ENCODE measurements at regions of chr1 and their contacts with region 1.

Region 1: GRCh38 chr1:54965624-54966340 is 14.6 kb upstream of the TMEM61 start:
- DNase-seq: peak; percentile 60
- ATAC-seq: peak; percentile 97
- H3K4me3 ChIP-seq: no peak overlapping the region
- H3K27ac ChIP-seq: peak overlapping the region; percentile 34; the same call in 1 of the 2 replicates
- H3K4me1 ChIP-seq: peaks cover 13% of the 10 kb centered on the region
- H3K27me3 ChIP-seq: no peaks in the 10 kb centered on the region
- CTCF ChIP-seq: no peak
- EP300 ChIP-seq: no peak
- POLR2A ChIP-seq: no peak
- RAD21 ChIP-seq: no peak

Region 2: GRCh38 chr1:54996359-54996868 is 30.6 kb after region 1 on chr1:
- CTCF ChIA-PET with region 1: interaction called, 17 read pairs
- POLR2A ChIA-PET with region 1: no interaction called
- RAD21 ChIA-PET with region 1: no interaction called
- SMC1A ChIA-PET with region 1: interaction called, 3 read pairs
- in situ Hi-C with region 1: no loop called
- intact Hi-C with region 1: no loop called
- DNase-seq: no peak
- ATAC-seq: peak; percentile 97
- H3K4me3 ChIP-seq: no peak overlapping the region
- H3K27ac ChIP-seq: no peak overlapping the region
- H3K4me1 ChIP-seq: peaks cover 3% of the 10 kb centered on the region; the same call in 1 of the 2 replicates
- H3K27me3 ChIP-seq: peaks cover 2 to 5% of the 10 kb centered on the region in 2 experiments
- CTCF ChIP-seq: peak; percentile 59 to 88 (median 87)
- EP300 ChIP-seq: no peak
- POLR2A ChIP-seq: no peak
- RAD21 ChIP-seq: peak; percentile 97